A673 (cell line): ENCODE measurements at regions of chr17 and their contacts with region 1.

Region 1: GRCh38 chr17:75764711-75765421 is at the start of gene GALK1:
- DNase-seq: peak; percentile 73
- H3K4me3 ChIP-seq: peak within 1 kb of the TSS; percentile 71
- H3K27ac ChIP-seq: peak within 1 kb of the TSS; percentile 58
- H3K4me1 ChIP-seq: peaks cover 8% of the 10 kb centered on the region
- H3K27me3 ChIP-seq: no peaks in the 10 kb centered on the region
- CTCF ChIP-seq: peak; percentile 26; the same call in 1 of the 2 replicates
- total RNA-seq, gene GALK1: 18.3 and 29.7 TPM in 2 replicates

Region 2: DNA sequence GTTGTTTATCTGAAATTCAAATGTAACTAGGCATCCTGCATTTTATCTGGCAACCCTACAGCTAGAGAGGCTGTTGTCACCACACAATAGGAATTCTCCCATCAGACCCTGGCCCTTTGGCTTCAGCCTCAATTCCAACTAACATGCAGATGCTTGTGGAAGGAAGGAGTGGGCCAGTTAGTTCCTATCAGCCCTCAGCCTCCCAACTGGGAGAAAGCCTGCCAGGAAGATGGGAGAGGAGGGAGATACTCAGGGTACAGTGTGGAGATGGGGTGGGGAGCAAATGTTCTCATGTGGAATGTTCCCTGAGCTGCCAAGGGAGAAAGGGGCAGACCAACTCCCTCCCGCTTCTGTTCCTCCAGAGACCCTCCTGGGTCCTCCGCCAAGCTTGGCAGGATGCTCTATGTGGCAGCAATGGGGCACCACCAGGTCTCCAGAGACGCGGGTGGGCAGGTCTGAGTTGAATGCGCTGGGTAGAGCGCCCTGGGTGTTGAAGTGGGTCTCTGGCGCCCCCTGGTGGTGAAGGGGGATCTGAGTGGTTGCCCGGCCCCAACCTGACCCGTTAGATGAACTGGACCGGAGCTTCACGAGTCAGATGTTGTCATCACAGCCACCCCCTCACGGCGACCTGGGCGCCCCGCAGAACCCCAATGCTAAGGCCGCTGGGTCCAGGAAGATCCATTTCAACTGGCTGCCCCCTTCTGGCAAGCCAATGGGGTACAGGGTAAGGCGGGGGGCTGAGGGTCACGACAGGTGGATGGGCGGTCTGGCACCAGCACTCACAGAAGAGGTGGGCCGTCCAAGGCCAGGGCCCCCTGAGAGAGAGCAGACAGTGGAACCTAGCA is 15.1 kb before region 1 on chr17:
- CTCF ChIA-PET with region 1: interaction called, 10 read pairs
- POLR2A ChIA-PET with region 1: interaction called, 4 read pairs
- intact Hi-C with region 1: no loop called
- DNase-seq: peak; percentile 84
- H3K4me3 ChIP-seq: no peak overlapping the region
- H3K27ac ChIP-seq: no peak overlapping the region
- H3K4me1 ChIP-seq: peaks cover 5% of the 10 kb centered on the region
- H3K27me3 ChIP-seq: no peaks in the 10 kb centered on the region
- CTCF ChIP-seq: peak; percentile 95

Region 3: GRCh38 chr17:75779231-75779986 is 14.5 kb after region 1 on chr17:
- CTCF ChIA-PET with region 1: interaction called, 4 read pairs
- POLR2A ChIA-PET with region 1: interaction called, 18 read pairs
- intact Hi-C with region 1: no loop called
- DNase-seq: peak; percentile 100
- H3K4me3 ChIP-seq: peak overlapping the region; percentile 88
- H3K27ac ChIP-seq: peak overlapping the region; percentile 98
- H3K4me1 ChIP-seq: peaks cover 28% of the 10 kb centered on the region
- H3K27me3 ChIP-seq: no peaks in the 10 kb centered on the region
- CTCF ChIP-seq: 0 out of 2 replicates have a peak, but pooled peaks have one; percentile 0

Region 4: GRCh38 chr17:75940724-75941441 is 176.0 kb after region 1 on chr17 and contains the start of gene FBF1:
- CTCF ChIA-PET with region 1: no interaction called
- POLR2A ChIA-PET with region 1: no interaction called
- intact Hi-C with region 1: no loop called
- DNase-seq: peak; percentile 98
- H3K4me3 ChIP-seq: peak within 1 kb of the TSS; percentile 90
- H3K27ac ChIP-seq: peak within 1 kb of the TSS; percentile 91
- H3K4me1 ChIP-seq: peaks cover 11% of the 10 kb centered on the region
- H3K27me3 ChIP-seq: no peaks in the 10 kb centered on the region
- CTCF ChIP-seq: no peak
- total RNA-seq, gene FBF1: 34.4 and 35.6 TPM in 2 replicates